ENCODE measurements at regions of chr2 and their contacts with region 1.

Region 1: DNA sequence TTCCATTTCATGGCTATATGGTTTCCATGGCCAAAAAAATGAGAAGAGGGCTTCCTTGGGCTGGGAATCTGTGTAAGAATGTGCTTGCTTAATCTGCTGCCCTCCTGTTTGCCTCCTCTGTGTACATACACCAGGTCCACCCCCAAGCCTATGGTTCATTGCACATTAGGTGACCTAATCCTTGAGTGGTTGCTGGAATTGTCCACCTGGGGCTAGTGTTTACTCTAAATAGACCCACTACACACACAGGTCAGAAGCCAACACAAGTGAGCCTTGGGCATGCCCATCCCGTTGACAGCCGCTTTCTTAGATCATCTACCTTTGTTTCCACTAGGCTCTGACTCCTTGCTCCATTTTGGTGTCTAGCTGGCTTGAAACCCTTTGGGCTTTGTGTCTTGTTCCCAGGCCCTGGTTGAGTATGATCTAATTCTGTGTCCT is 59.2 kb upstream of the ATL2 start:
- DNase-seq: no peak
- CTCF ChIP-seq: no peak

Region 2: GRCh38 chr2:38448692-38449410 is 12.6 kb after region 1 on chr2:
- CTCF ChIA-PET with region 1: interaction called, 10 read pairs
- POLR2A ChIA-PET with region 1: no interaction called
- DNase-seq: no peak
- CTCF ChIP-seq: no peak